Activated B cell treated with CpG ODN at 0.5 μM for 24 hours (primary cell): ENCODE measurements at regions of chr1 and their contacts with region 1.

Region 1: DNA sequence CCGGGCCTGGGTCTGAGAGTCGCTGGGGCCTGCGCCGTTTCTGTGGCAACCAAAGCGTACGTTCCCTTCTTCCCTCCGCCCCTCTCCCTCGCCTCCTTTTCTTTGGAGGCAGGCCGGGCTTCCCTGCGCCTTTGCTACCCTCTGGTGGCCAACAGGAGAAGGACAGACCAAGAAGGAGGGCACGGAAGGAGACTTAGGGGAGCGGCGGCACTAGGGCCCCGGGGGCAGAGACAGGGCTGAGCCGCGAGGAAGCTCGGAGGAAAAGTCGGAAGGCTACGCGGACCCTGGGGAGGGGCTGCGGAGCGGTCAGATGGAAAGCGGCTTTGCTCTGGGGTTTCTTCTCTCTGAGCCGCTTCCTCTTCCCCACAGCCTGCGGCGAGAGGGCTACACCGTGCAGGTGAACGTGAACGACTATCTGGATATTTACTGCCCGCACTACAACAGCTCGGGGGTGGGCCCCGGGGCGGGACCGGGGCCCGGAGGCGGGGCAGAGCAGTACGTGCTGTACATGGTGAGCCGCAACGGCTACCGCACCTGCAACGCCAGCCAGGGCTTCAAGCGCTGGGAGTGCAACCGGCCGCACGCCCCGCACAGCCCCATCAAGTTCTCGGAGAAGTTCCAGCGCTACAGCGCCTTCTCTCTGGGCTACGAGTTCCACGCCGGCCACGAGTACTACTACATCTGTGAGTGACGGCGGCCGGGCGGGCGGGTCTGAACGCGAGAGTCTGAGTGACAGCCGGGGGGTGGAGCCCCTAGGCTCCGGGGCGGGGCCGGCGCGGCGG is 6.3 kb downstream of the EFNA3 start:
- DNase-seq: peak; percentile 95
- ATAC-seq: peak; percentile 77
- H3K4me3 Mint-ChIP-seq: peak overlapping the region; percentile 93
- H3K27ac Mint-ChIP-seq: peak overlapping the region; percentile 93
- H3K4me1 Mint-ChIP-seq: peaks cover 49% of the 10 kb centered on the region
- H3K27me3 Mint-ChIP-seq: peaks cover 25% of the 10 kb centered on the region
- CTCF ChIP-seq: peak; percentile 55

Region 2: DNA sequence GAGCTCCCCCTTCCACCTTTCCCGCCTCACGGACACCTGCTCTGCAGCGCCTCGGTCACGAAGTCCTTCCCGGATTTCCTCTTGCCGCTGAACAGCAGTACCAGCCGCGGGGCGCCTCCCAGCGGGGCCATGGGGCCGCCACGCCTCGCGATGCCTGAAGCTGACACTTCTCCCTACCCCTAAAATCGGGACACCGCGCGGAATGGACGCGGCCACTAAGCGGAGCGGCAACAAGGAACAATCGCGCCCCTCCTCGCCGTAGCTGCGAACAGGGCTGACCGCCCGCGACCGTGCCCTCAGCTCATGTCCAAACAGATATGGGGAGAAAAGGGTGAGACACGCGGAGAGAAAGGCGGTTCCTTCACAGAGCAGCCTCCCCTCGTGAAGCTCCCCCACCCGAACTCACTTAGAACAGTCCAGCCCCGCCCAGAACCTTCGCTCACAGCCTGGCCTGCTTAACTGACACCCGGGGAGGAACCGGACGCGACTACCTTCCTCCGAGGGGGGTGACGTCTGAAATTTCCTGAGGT is 148.3 kb before region 1 on chr1 and contains the start of gene PMVK:
- CTCF ChIA-PET with region 1: no interaction called
- POLR2A ChIA-PET with region 1: interaction called, 7 read pairs
- intact Hi-C with region 1: loop called (anchors 1 kb)
- DNase-seq: peak; percentile 90
- ATAC-seq: peak; percentile 90
- H3K4me3 Mint-ChIP-seq: peak within 1 kb of the TSS; percentile 98
- H3K27ac Mint-ChIP-seq: peak within 1 kb of the TSS; percentile 100
- H3K4me1 Mint-ChIP-seq: peaks cover 58% of the 10 kb centered on the region
- H3K27me3 Mint-ChIP-seq: no peaks in the 10 kb centered on the region
- CTCF ChIP-seq: no peak
- total RNA-seq, gene PMVK: 24.6 and 26.3 TPM in 2 replicates

Region 3: DNA sequence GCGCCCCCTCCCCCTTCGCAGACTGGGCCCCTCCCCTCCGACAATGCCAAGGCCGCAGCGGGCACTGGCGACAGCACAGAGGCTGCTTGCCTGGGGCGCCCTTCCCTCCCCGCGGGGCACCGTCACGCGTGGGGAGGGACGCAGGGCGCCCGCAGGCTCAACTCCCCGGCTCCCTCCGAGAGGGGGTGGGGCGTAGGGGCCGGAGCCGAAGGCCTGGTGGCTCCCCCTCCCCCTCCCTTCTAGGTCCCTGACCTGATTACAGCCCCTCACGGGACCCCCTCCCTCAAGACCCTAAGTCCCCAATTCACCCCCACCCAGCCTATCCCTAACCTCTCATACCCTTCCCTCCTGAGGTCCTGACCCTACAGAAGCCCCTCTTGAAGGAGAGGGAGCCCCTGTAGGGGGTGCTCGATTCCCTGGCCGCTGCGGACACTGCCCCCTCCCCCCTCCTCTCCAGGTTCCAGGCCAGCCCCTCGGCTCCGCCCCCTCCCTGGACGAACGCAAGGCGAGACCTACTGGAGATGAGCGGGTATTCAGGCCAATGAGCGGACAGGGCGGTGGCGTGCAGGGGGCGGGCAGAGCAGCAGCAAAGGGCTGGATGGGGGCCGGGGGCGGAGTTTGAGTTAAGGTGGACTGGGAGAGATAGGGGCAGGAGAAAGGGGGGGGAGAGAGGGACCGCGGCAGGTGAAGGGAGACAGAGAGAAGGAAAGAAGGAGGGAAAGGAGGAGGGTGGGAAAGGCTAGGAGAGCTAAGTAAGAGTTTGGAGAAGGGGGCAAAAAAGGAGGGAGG is 83.0 kb before region 1 on chr1:
- CTCF ChIA-PET with region 1: interaction called, 3 read pairs
- POLR2A ChIA-PET with region 1: interaction called, 9 read pairs
- intact Hi-C with region 1: loop called (anchors 1 kb)
- DNase-seq: peak; percentile 94
- ATAC-seq: peak; percentile 81
- H3K4me3 Mint-ChIP-seq: peak overlapping the region; percentile 94
- H3K27ac Mint-ChIP-seq: peak overlapping the region; percentile 95
- H3K4me1 Mint-ChIP-seq: peaks cover 51% of the 10 kb centered on the region
- H3K27me3 Mint-ChIP-seq: no peaks in the 10 kb centered on the region
- CTCF ChIP-seq: no peak

Region 4: DNA sequence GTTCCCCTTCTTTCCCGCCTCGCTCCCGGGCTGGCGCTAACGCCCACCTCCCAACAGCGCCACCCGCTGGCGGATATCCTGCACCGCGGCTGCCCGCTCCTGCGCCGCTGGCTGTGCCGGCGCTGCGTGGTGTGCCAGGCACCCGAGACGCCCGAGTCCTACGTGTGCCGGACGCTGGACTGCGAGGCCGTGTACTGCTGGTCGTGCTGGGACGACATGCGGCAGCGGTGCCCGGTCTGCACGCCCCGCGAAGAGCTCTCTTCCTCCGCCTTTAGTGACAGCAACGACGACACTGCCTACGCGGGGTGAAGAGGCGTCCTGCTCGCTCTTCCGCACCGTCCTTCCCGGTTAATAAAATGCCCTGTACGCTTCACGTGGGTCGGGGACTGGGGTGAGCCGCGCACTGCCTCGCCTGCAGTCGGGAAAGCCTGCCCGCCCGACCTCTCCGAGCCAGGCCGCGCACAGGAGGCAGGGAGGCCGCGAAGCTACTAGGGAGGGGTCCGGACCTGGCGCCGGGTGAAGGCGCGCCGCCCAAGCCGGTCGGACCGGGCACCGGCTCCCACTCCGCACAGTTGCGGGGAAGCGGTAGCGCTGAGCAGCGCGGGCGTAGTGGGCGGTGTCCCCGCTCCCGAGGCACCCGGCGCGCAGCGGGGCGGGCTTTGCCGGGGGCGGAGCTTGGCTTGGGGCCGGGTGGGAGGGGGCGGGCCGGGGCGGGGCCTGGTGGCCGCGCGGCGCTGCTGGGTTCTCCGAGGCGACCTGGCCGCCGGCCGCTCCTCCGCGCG is 34.2 kb before region 1 on chr1 and contains the start of gene ADAM15:
- CTCF ChIA-PET with region 1: interaction called, 7 read pairs
- POLR2A ChIA-PET with region 1: interaction called, 12 read pairs
- intact Hi-C with region 1: loop called (anchors 1 kb)
- DNase-seq: peak; percentile 78
- ATAC-seq: peak; percentile 83
- H3K4me3 Mint-ChIP-seq: peak within 1 kb of the TSS; percentile 86
- H3K27ac Mint-ChIP-seq: no peak within 1 kb of the TSS
- H3K4me1 Mint-ChIP-seq: peaks cover 22% of the 10 kb centered on the region
- H3K27me3 Mint-ChIP-seq: no peaks in the 10 kb centered on the region
- CTCF ChIP-seq: peak; percentile 56
- total RNA-seq, gene ADAM15: 11.3 and 13.7 TPM in 2 replicates

Region 5: GRCh38 chr1:155070721-155071569 is 14.0 kb before region 1 on chr1:
- CTCF ChIA-PET with region 1: interaction called, 84 read pairs
- POLR2A ChIA-PET with region 1: interaction called, 8 read pairs
- intact Hi-C with region 1: loop called (anchors 1 kb)
- DNase-seq: peak; percentile 72
- ATAC-seq: peak; percentile 99
- H3K4me3 Mint-ChIP-seq: peak overlapping the region; percentile 55
- H3K27ac Mint-ChIP-seq: peak overlapping the region; percentile 77
- H3K4me1 Mint-ChIP-seq: peaks cover 54% of the 10 kb centered on the region
- H3K27me3 Mint-ChIP-seq: no peaks in the 10 kb centered on the region
- CTCF ChIP-seq: no peak

Region 6: GRCh38 chr1:155172732-155173477 is 88.0 kb after region 1 on chr1 and contains the start of gene KRTCAP2:
- CTCF ChIA-PET with region 1: interaction called, 145 read pairs
- POLR2A ChIA-PET with region 1: interaction called, 13 read pairs
- intact Hi-C with region 1: loop called (anchors 2 kb)
- DNase-seq: peak; percentile 87
- ATAC-seq: peak; percentile 85
- H3K4me3 Mint-ChIP-seq: peak within 1 kb of the TSS; percentile 99
- H3K27ac Mint-ChIP-seq: peak within 1 kb of the TSS; percentile 98
- H3K4me1 Mint-ChIP-seq: peaks cover 33% of the 10 kb centered on the region
- H3K27me3 Mint-ChIP-seq: no peaks in the 10 kb centered on the region
- CTCF ChIP-seq: peak; percentile 97
- total RNA-seq, gene KRTCAP2: 128 and 132 TPM in 2 replicates